ENCODE measurements at regions of chr12 and their contacts with region 1.

Region 1: DNA sequence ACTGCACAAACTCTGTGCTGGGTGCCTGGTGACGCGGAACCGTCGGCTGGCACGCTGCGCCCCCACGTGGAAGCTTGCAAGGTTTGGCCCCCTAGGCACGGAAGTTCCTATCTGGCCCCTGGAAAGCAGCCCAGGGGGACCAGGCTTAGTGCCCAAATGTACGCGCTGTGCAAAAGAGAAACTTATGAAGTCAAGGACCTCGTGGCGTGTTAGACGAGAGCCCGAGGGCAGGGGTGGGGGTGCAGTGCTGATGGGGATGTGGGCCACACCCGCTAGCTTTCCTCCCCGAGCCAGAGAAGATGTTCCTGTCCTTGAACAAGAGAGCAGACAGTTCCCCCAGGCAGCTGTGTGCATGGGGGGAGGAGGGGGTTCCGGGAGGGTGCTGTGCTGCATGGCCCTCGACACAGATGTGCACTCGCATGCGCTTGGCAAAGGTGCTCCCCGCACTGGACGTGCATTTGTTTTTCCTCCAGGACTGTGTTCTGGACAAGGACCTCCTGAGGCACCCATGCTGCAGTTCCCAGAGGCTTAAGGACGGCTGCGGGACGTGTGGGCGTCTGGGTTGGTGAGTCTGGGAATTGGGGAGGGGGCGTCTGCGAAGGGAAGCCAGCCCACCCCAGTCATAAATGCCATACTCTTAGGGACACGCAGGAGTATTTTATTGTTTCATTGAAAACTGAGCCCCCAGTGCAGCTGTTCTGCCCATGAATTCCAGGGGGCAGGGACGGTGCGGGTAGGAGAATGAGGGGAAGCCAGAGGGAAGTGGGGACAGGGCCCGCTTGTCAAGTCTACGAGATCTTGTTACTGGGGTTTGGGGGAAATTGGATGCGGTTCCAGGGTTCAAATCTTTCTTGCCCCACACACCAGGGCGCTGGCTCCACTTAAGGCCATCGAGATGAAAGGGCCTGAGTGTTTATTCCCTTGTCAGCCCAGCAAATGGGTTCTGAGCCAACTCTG is 80.0 kb downstream of the NTF3 start:
- H3K4me3 Mint-ChIP-seq: no peak overlapping the region
- H3K27ac Mint-ChIP-seq: no peak overlapping the region
- H3K4me1 Mint-ChIP-seq: no peaks in the 10 kb centered on the region
- H3K27me3 Mint-ChIP-seq: peaks cover 18% of the 10 kb centered on the region

Region 2: DNA sequence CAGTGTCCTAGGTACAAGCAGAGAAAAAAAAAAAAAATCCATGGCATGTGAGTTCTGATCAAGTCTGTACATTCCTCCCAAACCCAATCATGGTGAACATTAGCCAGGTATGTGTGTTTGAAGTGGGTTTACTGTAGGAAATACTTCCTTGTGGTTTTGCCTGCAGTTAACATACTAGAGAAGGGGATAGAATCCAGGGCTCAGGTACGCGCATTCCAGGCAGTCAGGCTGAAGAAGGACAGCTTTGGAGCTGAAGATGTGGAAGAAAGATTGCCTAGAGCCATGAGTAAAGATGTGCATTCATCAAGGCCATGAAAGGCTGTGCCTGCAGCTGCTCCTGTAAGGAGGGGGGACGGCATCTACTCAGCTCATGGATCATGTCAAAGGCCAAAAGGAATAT is 168.2 kb before region 1 on chr12:
- intact Hi-C with region 1: no loop called
- H3K4me3 Mint-ChIP-seq: no peak overlapping the region
- H3K27ac Mint-ChIP-seq: no peak overlapping the region
- H3K4me1 Mint-ChIP-seq: no peaks in the 10 kb centered on the region
- H3K27me3 Mint-ChIP-seq: peaks cover 3% of the 10 kb centered on the region

Region 3: DNA sequence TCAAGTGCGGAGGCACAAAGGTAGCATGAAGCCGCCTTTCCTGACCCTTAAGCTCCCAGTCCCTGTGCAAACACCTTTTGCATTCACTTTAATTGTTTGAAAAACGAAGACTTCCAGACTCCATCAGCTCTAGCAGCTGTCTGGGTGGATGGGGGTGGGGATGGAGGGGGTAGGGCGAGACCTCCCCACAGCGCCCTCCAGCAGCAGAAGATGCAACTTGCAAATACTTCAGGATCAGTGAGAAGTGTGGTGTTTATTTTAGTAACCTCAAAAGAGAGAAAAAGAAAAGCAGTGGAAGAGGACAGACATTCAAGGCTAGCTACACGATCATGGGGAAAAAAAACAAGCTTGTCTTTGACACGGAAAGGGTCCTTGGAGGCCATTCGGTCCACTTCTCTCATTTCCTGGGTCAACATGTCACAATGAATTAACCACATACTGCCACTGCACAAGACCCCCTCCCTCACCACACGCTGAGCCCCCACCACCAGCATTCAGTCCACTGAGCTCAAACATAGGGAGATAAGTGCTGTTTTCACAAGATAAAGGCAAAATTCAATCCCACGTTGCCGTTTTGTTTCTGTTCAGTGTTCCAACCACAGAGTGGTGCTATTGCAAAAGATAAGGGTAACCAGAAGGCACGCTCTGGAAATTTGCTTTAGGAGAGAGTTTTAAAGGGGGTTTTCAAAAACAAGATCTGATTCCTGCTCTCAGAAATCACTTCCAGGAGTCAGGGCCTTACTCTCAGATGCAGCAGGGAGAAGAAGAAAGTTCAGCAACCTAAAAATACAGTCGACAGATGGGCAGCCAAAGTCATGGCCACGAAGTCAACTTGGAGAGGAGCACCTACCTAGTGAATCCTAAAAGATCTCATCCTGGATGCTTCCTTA is 83.3 kb before region 1 on chr12:
- intact Hi-C with region 1: loop called (anchors 10 kb)
- H3K4me3 Mint-ChIP-seq: no peak overlapping the region
- H3K27ac Mint-ChIP-seq: no peak overlapping the region
- H3K4me1 Mint-ChIP-seq: peaks cover 22% of the 10 kb centered on the region
- H3K27me3 Mint-ChIP-seq: peaks cover 44% of the 10 kb centered on the region

Region 4: DNA sequence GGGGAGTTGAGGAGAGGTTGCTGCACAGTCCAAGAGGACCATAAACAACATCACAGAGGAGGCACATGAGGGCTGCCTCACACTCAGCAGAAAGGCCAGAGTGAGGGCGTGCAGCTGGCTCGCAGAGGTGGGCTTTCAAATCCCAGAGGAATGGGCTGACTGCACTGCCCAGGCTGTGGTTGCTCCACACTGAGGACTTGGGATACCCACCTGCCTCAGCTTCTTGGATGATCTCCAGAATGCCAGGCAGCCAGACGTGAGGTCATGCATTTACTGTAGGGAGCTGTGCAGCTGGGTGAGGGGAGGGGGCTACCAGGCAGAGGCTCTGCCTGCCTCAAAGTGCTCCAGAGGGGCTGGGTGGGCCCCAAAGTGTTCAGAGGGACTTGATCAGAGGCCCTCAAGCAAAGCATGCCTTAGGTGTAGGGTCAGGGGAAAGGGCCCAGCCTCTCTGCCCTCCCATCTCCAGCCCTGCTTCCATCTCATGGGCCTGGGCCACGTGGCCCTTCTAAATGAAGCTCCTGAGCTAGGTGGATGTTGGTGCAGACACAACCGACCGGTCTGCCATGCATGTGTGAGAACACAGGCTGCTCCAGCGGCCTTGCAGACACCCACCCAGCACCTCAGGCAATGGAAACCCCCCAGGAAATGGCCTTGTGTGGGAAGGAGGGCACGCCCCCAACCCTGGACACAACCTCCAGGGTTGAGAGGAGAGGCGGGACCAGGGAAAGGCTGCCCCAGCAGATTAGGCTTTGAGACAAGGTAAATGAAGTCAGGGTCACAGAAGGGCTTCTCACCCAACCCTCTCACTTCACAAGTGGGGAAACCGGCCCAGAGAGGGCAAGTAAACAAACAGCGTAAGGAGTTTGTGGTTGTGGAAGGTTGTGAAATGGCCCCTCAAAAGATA is 10.8 kb after region 1 on chr12:
- intact Hi-C with region 1: no loop called
- H3K4me3 Mint-ChIP-seq: no peak overlapping the region
- H3K27ac Mint-ChIP-seq: no peak overlapping the region
- H3K4me1 Mint-ChIP-seq: no peaks in the 10 kb centered on the region
- H3K27me3 Mint-ChIP-seq: no peaks in the 10 kb centered on the region